Panc1 (cell line): ENCODE measurements at regions of chr12 and their contacts with region 1.

Region 1: GRCh38 chr12:27969624-27970400 is 2.7 kb downstream of the PTHLH start:
- DNase-seq: no peak
- ATAC-seq: peak; percentile 87
- H3K4me3 ChIP-seq: peak overlapping the region; percentile 60 to 75
- H3K27ac ChIP-seq: peak overlapping the region; percentile 67
- H3K4me1 ChIP-seq: peaks cover 24% of the 10 kb centered on the region
- H3K27me3 ChIP-seq: peaks cover 14% of the 10 kb centered on the region
- CTCF ChIP-seq: peak; percentile 86

Region 2: GRCh38 chr12:27861428-27862167 is 108.2 kb before region 1 on chr12:
- CTCF ChIA-PET with region 1: no interaction called
- POLR2A ChIA-PET with region 1: no interaction called
- in situ Hi-C with region 1: no loop called
- intact Hi-C with region 1: no loop called
- DNase-seq: no peak
- ATAC-seq: no peak
- H3K4me3 ChIP-seq: no peak overlapping the region
- H3K27ac ChIP-seq: no peak overlapping the region
- H3K4me1 ChIP-seq: no peaks in the 10 kb centered on the region
- H3K27me3 ChIP-seq: no peaks in the 10 kb centered on the region
- CTCF ChIP-seq: no peak

Region 3: DNA sequence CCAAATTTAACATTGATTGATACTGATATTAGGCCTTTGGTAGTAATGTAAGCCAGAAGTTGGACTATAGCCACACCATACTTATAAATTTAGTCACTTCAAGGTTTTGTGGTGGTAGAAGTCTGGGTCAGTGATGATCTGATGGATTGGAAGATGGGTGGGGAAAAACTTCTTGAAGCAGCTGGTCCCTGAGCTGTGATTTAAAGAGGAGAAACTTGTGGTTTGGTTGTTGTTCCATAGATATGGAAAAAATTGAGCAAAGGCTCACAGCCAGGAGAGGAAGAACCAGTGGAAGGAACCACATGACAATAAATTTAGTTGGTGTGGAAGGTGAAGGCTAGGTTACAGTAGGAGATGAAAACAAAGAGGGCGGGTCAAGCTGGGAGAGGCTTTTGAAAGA is 23.4 kb before region 1 on chr12:
- CTCF ChIA-PET with region 1: no interaction called
- POLR2A ChIA-PET with region 1: no interaction called
- in situ Hi-C with region 1: no loop called
- intact Hi-C with region 1: no loop called
- DNase-seq: no peak
- ATAC-seq: no peak
- H3K4me3 ChIP-seq: no peak overlapping the region
- H3K27ac ChIP-seq: no peak overlapping the region
- H3K4me1 ChIP-seq: no peaks in the 10 kb centered on the region
- H3K27me3 ChIP-seq: no peaks in the 10 kb centered on the region
- CTCF ChIP-seq: no peak

Region 4: GRCh38 chr12:28051516-28052354 is 81.9 kb after region 1 on chr12:
- CTCF ChIA-PET with region 1: no interaction called
- POLR2A ChIA-PET with region 1: no interaction called
- in situ Hi-C with region 1: no loop called
- intact Hi-C with region 1: no loop called
- DNase-seq: no peak
- ATAC-seq: no peak
- H3K4me3 ChIP-seq: no peak overlapping the region
- H3K27ac ChIP-seq: no peak overlapping the region
- H3K4me1 ChIP-seq: no peaks in the 10 kb centered on the region
- H3K27me3 ChIP-seq: no peaks in the 10 kb centered on the region
- CTCF ChIP-seq: no peak

Region 5: GRCh38 chr12:28172434-28173030 is 202.7 kb after region 1 on chr12:
- CTCF ChIA-PET with region 1: no interaction called
- POLR2A ChIA-PET with region 1: no interaction called
- in situ Hi-C with region 1: no loop called
- intact Hi-C with region 1: loop called (anchors 2 kb)
- DNase-seq: peak; percentile 59
- ATAC-seq: peak; percentile 84
- H3K4me3 ChIP-seq: no peak overlapping the region
- H3K27ac ChIP-seq: no peak overlapping the region
- H3K4me1 ChIP-seq: no peaks in the 10 kb centered on the region
- H3K27me3 ChIP-seq: no peaks in the 10 kb centered on the region
- CTCF ChIP-seq: peak; percentile 77